Tibial artery (tissue), 4 donors: ENCODE measurements at regions of chr10 and their contacts with region 1.

Region 1: GRCh38 chr10:68792115-68792514 is 35.2 kb upstream of the STOX1 start:
- DNase-seq: no peak
- H3K4me3 ChIP-seq: no peak overlapping the region
- H3K27ac ChIP-seq: no peak overlapping the region
- H3K4me1 ChIP-seq: no peaks in the 10 kb centered on the region
- H3K27me3 ChIP-seq: no peaks in the 10 kb centered on the region
- CTCF ChIP-seq: no peak

Region 2: GRCh38 chr10:68813559-68813958 is 21.4 kb after region 1 on chr10:
- intact Hi-C with region 1: no loop called
- DNase-seq: no peak
- H3K4me3 ChIP-seq: no peak overlapping the region
- H3K27ac ChIP-seq: no peak overlapping the region
- H3K4me1 ChIP-seq: peaks cover 0 to 7% (median 0%) of the 10 kb centered on the region in 4 donors
- H3K27me3 ChIP-seq: no peaks in the 10 kb centered on the region
- CTCF ChIP-seq: no peak

Region 3: DNA sequence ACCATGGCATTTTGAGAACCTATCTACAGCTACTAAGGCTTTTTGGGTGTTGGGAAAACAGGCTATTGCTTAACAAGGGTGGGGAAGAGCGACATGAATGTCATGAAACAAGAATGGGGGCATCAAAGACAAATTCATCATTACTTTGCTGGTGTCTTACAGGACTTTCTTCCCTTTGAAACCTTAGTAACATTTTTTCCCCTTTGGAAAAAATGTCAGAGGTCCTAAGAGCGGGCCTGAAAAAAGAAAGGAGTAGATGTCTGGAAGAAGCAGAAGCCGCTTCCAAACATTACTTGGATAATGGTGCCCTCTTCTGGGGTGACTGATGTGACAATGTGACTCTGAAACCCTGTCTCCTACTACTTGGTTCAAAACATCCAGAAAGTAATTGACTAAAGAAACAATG is 105.2 kb after region 1 on chr10:
- intact Hi-C with region 1: loop called (anchors 10 kb)
- DNase-seq: peak in 1 of 2 donors; percentile 34
- H3K4me3 ChIP-seq: no peak overlapping the region
- H3K27ac ChIP-seq: no peak overlapping the region
- H3K4me1 ChIP-seq: peaks cover 0 to 17% (median 8%) of the 10 kb centered on the region in 4 donors
- H3K27me3 ChIP-seq: no peaks in the 10 kb centered on the region
- CTCF ChIP-seq: peak; percentile 51 to 52